ENCODE measurements at regions of chr22 and their contacts with region 1.

Region 1: GRCh38 chr22:41742916-41743315 is 43.6 kb downstream of the MEI1 start:
- DNase-seq: no peak

Region 2: GRCh38 chr22:41582694-41583093 is 160.2 kb before region 1 on chr22:
- intact Hi-C with region 1: no loop called
- DNase-seq: no peak

Region 3: GRCh38 chr22:41753956-41754355 is 11.0 kb after region 1 on chr22:
- intact Hi-C with region 1: loop called in 1 of 2 experiments (anchors 1 kb)
- DNase-seq: no peak

Measured in posterior vena cava (tissue), 2 donors.